Stomach (tissue), 19 donors: ENCODE measurements at regions of chr19 and their contacts with region 1.

Region 1: DNA sequence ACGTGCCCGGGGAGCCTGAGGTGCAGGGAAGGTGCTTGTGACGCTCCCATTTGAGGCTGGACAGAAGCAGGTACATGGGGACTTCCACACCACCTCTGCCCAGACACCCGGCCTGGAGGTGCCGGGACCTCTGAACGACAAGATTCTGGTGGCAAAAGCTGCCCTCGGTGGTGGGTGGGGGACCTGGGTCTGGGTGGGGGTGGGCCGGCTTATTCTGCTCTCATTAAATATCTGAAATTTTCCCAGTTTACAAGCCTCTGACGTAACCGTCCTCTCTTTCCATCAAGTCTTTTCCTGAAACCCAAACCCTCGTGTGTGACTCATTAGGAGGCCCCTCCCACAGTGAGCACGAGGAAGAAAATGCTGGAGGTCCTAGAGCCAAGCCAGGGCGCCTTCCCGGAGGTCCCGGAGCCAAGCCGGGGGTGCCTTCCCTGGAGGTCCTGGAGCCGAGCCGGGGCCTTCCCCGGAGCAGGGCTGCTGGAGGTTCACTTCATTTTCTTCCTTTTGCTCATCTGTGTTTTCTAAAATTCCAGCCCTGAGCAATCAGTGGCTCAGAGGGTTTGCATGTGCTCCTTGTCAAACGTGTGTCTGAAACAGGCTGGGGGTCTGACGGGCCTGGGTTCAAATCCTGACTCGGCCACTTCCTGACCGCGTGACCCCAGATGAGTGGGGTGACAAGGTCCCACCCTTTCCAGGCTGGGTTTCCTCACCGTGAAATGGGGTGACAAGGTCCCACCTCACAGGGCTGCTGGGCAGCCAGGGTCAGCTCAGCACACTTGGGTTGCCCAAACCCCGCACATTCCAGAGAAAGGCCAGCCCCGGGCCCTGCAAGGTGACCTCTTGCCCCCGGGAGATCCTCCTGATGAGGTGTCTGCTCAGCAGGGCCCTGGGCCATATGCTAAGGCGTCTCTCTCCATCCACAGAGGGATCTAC is 10.0 kb downstream of the CFD start:
- DNase-seq: peak in 1 of 2 donors; percentile 79
- H3K4me3 ChIP-seq: no peak overlapping the region
- H3K27ac ChIP-seq: peak overlapping the region; percentile 58 to 90 (median 84)
- H3K4me1 ChIP-seq: peaks cover 12 to 52% (median 33%) of the 10 kb centered on the region in 4 donors
- H3K27me3 ChIP-seq: no peaks in the 10 kb centered on the region
- CTCF ChIP-seq: no peak
- EP300 ChIP-seq: no peak
- POLR2A ChIP-seq: no peak

Region 2: DNA sequence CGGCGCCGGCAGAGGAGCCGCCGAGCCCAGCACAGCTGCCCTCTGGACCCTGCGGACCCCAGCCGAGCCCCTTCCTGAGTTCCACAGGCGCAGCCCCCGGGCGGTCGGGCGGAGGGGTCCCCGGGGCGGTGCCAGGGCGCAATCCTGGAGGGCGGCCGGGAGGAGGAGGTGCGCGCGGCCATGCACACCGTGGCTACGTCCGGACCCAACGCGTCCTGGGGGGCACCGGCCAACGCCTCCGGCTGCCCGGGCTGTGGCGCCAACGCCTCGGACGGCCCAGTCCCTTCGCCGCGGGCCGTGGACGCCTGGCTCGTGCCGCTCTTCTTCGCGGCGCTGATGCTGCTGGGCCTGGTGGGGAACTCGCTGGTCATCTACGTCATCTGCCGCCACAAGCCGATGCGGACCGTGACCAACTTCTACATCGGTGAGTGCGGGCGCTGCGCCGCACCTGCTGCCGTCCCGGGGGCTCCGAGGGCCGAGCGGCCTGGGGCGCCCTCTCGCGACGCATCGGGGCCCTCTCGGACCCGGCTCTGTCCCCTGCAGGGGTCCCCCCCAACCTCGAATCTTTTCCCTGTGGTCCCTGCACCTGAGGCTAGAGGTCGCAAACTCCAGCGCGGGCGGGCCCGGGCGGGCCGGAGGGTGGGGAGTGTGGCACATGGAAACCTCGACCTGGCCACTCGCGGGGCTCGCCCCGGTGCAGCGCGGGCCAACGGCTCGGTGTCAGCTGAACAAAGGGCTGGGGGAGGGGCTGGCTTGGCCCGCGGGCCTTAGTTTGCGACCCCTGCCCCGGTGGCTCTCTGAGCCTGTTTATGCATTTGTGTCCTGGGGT is 48.0 kb after region 1 on chr19 and contains the start of gene KISS1R:
- intact Hi-C with region 1: loop called (anchors 5 kb)
- DNase-seq: peak; percentile 44 to 80
- H3K4me3 ChIP-seq: peak within 1 kb of the TSS; percentile 17 to 50 (median 33)
- H3K27ac ChIP-seq: no peak within 1 kb of the TSS
- H3K4me1 ChIP-seq: peaks cover 36 to 65% (median 58%) of the 10 kb centered on the region in 4 donors
- H3K27me3 ChIP-seq: peaks cover 26 to 57% (median 53%) of the 10 kb centered on the region in 3 donors
- CTCF ChIP-seq: peak in 4 of 7 experiments; percentile 9 to 43 (median 20)
- EP300 ChIP-seq: no peak
- POLR2A ChIP-seq: no peak
- total RNA-seq, gene KISS1R: not detected

Region 3: DNA sequence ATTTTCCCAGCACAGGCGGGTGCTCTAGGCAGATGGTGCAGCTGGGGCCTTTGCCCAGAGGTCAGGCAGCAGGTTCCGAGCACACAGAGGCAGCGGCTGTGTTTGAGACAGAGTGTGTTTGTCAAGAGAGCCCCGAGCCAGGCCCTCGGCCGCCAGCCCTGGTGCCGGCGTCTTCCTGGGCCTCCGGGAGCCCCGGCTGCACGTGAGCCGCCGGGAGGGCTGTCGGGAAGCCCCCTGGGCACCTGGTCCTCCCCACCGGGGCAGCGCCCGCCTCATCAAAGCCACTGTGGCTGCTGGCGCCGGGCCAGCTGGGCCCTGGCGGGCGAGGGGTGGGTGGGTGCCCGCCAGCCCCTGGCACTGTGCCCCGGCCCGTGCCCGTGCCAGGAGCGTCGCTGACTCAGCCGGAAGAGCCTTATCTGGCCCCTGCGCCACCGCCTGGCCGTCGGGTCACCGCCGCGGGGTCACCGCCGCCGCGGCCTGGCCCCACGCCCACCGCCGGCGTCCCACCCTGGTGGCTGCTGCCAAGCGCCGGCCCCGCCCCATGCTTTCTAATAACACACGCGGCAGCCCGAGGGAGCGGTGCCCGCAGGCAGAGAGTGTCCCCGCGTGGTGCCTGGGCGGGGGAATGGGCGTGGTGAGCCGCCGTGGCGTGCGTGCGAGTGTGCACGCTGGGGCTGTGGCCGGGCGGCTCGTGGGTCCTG is 71.2 kb after region 1 on chr19:
- intact Hi-C with region 1: no loop called
- DNase-seq: peak; percentile 91 to 92
- H3K4me3 ChIP-seq: peak overlapping the region; percentile 33 to 45 (median 37)
- H3K27ac ChIP-seq: peak overlapping the region; percentile 85 to 90 (median 89)
- H3K4me1 ChIP-seq: peaks cover 25 to 55% (median 43%) of the 10 kb centered on the region in 4 donors
- H3K27me3 ChIP-seq: peaks cover 0 to 12% (median 0%) of the 10 kb centered on the region in 3 donors
- CTCF ChIP-seq: peak in 1 of 7 experiments; percentile 12
- EP300 ChIP-seq: no peak
- POLR2A ChIP-seq: no peak